ENCODE measurements at regions of chr4 and their contacts with region 1.

Region 1: GRCh38 chr4:4260253-4260652 is 12.2 kb upstream of the TMEM128 start:
- DNase-seq: peak; percentile 40
- ATAC-seq: peak; percentile 98
- H3K4me3 Mint-ChIP-seq: no peak overlapping the region
- H3K27ac Mint-ChIP-seq: no peak overlapping the region
- H3K4me1 Mint-ChIP-seq: peaks cover 3% of the 10 kb centered on the region
- H3K27me3 Mint-ChIP-seq: peaks cover under 1% of the 10 kb centered on the region

Region 2: DNA sequence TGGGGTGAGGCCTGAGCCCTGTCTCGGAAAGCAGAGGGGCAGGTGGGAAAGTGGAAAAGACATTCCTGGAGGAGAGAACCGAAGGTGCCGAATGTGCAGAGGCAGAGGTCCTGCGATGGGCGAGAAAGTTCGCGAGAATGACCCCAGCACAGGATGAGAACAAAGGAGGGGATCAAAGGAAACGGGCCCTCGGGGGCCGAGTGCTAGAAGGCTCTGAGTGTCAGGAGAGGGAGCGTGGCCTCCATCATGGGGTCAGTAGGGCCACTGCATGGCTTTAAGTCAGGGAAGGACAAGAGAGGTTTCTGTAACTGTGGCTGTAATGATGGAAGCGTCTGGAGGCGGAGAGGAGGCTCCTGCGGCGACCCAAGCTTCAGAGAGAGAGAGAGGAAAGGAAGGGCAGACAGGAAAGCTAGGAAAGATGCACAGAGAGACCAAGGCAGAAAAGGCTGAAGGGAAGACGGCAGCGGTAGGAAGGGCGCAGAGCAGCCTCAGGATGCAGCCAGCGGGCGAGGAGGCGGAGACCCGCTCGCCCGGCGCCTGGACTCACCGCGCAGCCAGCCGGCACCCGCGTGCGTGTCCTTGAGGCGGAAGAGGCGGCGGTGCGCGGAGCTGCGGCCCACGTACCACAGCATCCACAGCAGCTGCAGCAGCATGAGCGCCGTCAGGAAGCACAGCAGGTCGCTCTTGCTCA is 34.2 kb before region 1 on chr4:
- CTCF ChIA-PET with region 1: no interaction called
- POLR2A ChIA-PET with region 1: no interaction called
- DNase-seq: no peak
- ATAC-seq: no peak
- H3K4me3 Mint-ChIP-seq: no peak overlapping the region
- H3K27ac Mint-ChIP-seq: no peak overlapping the region
- H3K4me1 Mint-ChIP-seq: peaks cover 3% of the 10 kb centered on the region
- H3K27me3 Mint-ChIP-seq: peaks cover 57% of the 10 kb centered on the region

Region 3: GRCh38 chr4:4248029-4248884 is 12.0 kb before region 1 on chr4 and contains the start of gene TMEM128:
- CTCF ChIA-PET with region 1: interaction called, 58 read pairs
- POLR2A ChIA-PET with region 1: interaction called, 6 read pairs
- DNase-seq: peak; percentile 94
- ATAC-seq: peak; percentile 97
- H3K4me3 Mint-ChIP-seq: peak within 1 kb of the TSS; percentile 95
- H3K27ac Mint-ChIP-seq: peak within 1 kb of the TSS; percentile 98
- H3K4me1 Mint-ChIP-seq: peaks cover 29% of the 10 kb centered on the region
- H3K27me3 Mint-ChIP-seq: no peaks in the 10 kb centered on the region
- total RNA-seq, gene TMEM128: 14.0 to 15.9 TPM

Region 4: GRCh38 chr4:4284827-4285618 is 24.8 kb after region 1 on chr4:
- CTCF ChIA-PET with region 1: interaction called, 13 read pairs
- POLR2A ChIA-PET with region 1: no interaction called
- DNase-seq: no peak
- ATAC-seq: no peak
- H3K4me3 Mint-ChIP-seq: no peak overlapping the region
- H3K27ac Mint-ChIP-seq: peak overlapping the region; percentile 40
- H3K4me1 Mint-ChIP-seq: peaks cover 24% of the 10 kb centered on the region
- H3K27me3 Mint-ChIP-seq: no peaks in the 10 kb centered on the region

Region 5: DNA sequence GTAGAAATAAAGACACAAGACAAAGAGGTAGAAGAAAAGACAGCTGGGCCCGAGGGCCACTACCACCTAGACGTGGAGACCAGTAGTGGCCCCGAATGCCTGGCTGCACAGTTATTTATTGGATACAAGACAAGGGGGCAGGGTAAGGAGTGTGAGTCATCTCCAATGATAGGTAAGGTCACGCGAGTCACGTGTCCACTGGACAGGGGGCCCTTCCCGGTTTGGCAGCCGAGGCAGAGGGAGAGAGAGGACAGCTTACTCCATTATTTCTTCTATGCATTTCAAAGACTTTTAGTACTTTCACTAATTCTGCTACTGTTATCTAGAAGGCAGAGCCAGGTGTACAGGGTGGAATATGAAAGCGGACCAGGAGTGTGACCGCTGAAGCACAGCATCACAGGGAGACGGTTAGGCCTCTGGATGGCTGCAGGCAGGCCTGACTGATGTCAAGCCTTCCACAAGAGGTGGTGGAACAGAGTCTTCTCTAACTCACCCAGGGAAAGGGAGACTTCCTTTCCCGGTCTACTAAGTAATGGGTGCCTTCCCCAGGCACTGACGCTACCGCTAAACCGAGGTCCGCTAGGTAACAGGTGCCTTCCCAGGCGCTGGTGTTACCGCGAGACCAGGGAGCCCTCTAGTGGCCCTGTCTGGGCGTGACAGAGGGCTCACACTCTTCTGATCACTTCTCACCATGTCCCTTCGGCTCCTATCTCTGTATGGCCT is 74.7 kb after region 1 on chr4:
- CTCF ChIA-PET with region 1: interaction called, 68 read pairs
- POLR2A ChIA-PET with region 1: no interaction called
- DNase-seq: peak; percentile 83
- ATAC-seq: peak; percentile 95
- H3K4me3 Mint-ChIP-seq: no peak overlapping the region
- H3K27ac Mint-ChIP-seq: no peak overlapping the region
- H3K4me1 Mint-ChIP-seq: peaks cover 8% of the 10 kb centered on the region
- H3K27me3 Mint-ChIP-seq: peaks cover 3% of the 10 kb centered on the region

Region 6: GRCh38 chr4:4344915-4345527 is 84.8 kb after region 1 on chr4:
- CTCF ChIA-PET with region 1: interaction called, 68 read pairs
- POLR2A ChIA-PET with region 1: no interaction called
- DNase-seq: no peak
- ATAC-seq: no peak
- H3K4me3 Mint-ChIP-seq: no peak overlapping the region
- H3K27ac Mint-ChIP-seq: no peak overlapping the region
- H3K4me1 Mint-ChIP-seq: peaks cover 32% of the 10 kb centered on the region
- H3K27me3 Mint-ChIP-seq: no peaks in the 10 kb centered on the region

Region 7: DNA sequence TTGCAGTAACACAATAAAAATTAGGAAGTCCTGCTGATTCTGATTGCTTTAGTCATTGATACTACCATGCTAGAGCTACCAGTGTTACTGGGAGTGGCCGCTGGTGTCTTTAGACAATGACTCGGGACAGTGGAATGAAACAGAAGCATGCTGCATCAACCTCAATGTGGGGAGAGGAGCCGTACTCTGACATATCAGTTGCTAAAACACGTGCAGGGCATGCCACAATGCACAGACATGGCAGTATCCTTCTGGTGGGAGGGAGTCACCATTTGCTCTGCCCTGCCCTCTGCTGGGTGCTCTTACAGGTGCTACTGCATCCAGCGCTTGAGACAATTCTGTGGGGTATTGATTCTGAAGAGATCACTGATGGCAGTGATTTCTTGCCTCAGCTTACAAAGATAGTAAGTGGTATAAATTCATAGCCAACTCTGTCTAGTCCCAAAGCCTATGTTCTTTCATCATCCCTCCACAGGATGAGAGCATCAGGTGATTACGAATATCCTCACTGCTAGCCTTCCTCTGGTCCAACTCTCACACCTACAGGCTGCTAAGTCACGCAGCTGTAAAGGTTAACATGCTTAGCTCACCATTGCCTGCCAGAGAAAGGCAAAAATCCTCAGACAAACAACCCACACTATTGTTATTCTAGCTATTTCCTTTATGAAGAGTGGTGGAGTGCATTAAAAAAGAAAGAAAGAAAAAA is 170.4 kb after region 1 on chr4:
- CTCF ChIA-PET with region 1: interaction called, 26 read pairs
- POLR2A ChIA-PET with region 1: interaction called, 3 read pairs
- DNase-seq: peak; percentile 73
- ATAC-seq: peak; percentile 94
- H3K4me3 Mint-ChIP-seq: no peak overlapping the region
- H3K27ac Mint-ChIP-seq: no peak overlapping the region
- H3K4me1 Mint-ChIP-seq: peaks cover 3% of the 10 kb centered on the region
- H3K27me3 Mint-ChIP-seq: no peaks in the 10 kb centered on the region